Heart left ventricle (tissue), 16 donors: ENCODE measurements at regions of chr3 and their contacts with region 1.

Region 1: GRCh38 chr3:79361748-79362378 is 405.9 kb downstream of the ROBO1 start:
- DNase-seq: no peak
- ATAC-seq: peak in 1 of 4 donors; percentile 69
- H3K4me3 ChIP-seq: peak overlapping the region in 2 of 12 donors; percentile 1 to 26
- H3K27ac ChIP-seq: peak overlapping the region in 1 of 12 donors; percentile 31
- H3K4me1 ChIP-seq: no peaks in the 10 kb centered on the region
- H3K27me3 ChIP-seq: no peaks in the 10 kb centered on the region
- CTCF ChIP-seq: peak; percentile 53 to 81 (median 73)
- POLR2A ChIP-seq: no peak

Region 2: GRCh38 chr3:78754066-78754743 is 607.7 kb before region 1 on chr3:
- intact Hi-C with region 1: no loop called
- DNase-seq: no peak
- ATAC-seq: peak in 2 of 4 donors; percentile 15 to 75
- H3K4me3 ChIP-seq: no peak overlapping the region
- H3K27ac ChIP-seq: no peak overlapping the region
- H3K4me1 ChIP-seq: peaks cover 0 to 4% (median 0%) of the 10 kb centered on the region in 12 donors
- H3K27me3 ChIP-seq: no peaks in the 10 kb centered on the region
- CTCF ChIP-seq: no peak
- POLR2A ChIP-seq: no peak

Region 3: GRCh38 chr3:79086514-79086913 is 275.3 kb before region 1 on chr3:
- intact Hi-C with region 1: loop called in 9 of 10 experiments (anchors 1 to 10 kb)
- DNase-seq: peak in 3 of 5 donors; percentile 6 to 21 (median 20)
- ATAC-seq: no peak
- H3K4me3 ChIP-seq: no peak overlapping the region
- H3K27ac ChIP-seq: no peak overlapping the region
- H3K4me1 ChIP-seq: no peaks in the 10 kb centered on the region
- H3K27me3 ChIP-seq: no peaks in the 10 kb centered on the region
- CTCF ChIP-seq: peak; percentile 47 to 77 (median 64)
- POLR2A ChIP-seq: no peak

Region 4: GRCh38 chr3:79297237-79297960 is 64.5 kb before region 1 on chr3:
- intact Hi-C with region 1: no loop called
- DNase-seq: no peak
- ATAC-seq: no peak
- H3K4me3 ChIP-seq: no peak overlapping the region
- H3K27ac ChIP-seq: no peak overlapping the region
- H3K4me1 ChIP-seq: peaks cover 0 to 4% (median 0%) of the 10 kb centered on the region in 12 donors
- H3K27me3 ChIP-seq: no peaks in the 10 kb centered on the region
- CTCF ChIP-seq: no peak
- POLR2A ChIP-seq: no peak

Region 5: GRCh38 chr3:79497447-79498111 is 135.7 kb after region 1 on chr3:
- intact Hi-C with region 1: no loop called
- DNase-seq: no peak
- ATAC-seq: no peak
- H3K4me3 ChIP-seq: no peak overlapping the region
- H3K27ac ChIP-seq: no peak overlapping the region
- H3K4me1 ChIP-seq: no peaks in the 10 kb centered on the region
- H3K27me3 ChIP-seq: no peaks in the 10 kb centered on the region
- CTCF ChIP-seq: peak; percentile 37 to 69 (median 56)
- POLR2A ChIP-seq: no peak